CD4-positive, alpha-beta memory T cell (primary cell): ENCODE measurements at regions of chr15 and their contacts with region 1.

Region 1: DNA sequence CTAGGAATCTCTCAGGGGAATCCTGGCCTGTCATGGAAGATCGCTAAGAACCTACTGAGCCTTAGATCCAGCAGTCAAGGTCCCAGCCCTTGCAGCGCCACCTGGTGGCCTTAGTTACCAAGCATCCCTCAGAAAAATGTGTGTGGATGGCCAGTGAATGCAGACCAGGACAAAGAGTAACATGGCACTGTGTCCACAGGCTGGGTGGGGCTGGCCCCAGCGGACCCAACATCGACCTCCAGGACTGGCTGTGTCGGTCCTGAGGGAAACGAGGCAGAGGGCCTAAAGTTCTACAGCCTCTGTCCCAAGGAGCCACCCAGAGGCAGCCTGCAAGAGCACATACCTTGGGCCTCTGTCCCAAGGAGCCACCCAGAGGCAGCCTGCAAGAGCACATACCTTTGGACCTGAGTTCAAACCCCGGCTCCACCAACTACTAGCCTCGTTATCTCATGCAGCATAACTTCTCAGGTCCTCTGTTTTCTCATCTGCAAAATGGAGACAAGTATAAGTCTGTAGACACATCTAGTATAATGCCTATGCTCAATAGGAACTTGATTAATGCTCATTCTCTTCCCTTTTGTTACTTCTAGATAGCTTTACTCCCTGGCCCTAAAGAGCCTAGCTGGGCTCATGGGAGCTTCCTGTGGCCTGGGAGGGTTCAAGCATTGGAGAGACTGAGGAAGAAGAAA is 57.5 kb upstream of the HERC1 start:
- DNase-seq: peak; percentile 63 to 76 (median 69)
- H3K4me3 ChIP-seq: no peak overlapping the region
- H3K4me3 Mint-ChIP-seq: peak overlapping the region in 5 of 8 donors; percentile 4 to 79 (median 42)
- H3K27ac ChIP-seq: peak overlapping the region; percentile 53
- H3K27ac Mint-ChIP-seq: peak overlapping the region; percentile 71 to 94 (median 87)
- H3K4me1 ChIP-seq: peaks cover 58% of the 10 kb centered on the region
- H3K4me1 Mint-ChIP-seq: peaks cover 40 to 56% (median 49%) of the 10 kb centered on the region in 4 donors
- H3K27me3 ChIP-seq: no peaks in the 10 kb centered on the region
- H3K27me3 Mint-ChIP-seq: no peaks in the 10 kb centered on the region

Region 2: DNA sequence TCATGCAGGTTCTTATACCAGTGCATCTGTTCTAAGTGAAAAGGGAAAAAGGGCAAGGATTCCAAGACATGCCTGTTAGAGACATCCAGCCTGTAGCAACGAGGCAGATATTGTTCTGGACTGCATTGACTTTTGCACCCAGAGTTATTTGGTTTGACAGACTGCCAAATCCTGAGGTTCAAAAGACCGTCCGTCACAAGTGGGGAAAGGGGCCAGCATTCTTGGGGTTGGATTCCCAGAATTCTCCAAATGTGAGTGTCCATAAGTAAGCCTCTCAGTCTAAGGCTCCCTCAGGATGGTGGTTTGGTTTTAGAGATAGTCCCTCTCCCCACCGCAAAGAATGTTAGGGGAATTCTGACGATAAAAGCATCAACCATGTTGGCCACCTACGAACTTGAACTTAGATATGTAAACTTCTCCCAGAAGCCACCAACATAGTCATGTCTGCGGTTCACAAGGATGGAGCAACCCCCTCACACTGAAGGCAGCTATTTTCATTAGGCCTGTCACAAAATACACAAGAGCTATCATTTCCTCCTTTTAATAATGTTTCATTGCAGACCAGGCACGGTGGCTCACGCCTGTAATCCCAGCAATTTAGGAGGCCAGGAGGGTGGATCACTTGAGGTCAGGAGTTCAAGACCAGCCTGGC is 783.2 kb before region 1 on chr15:
- CTCF ChIA-PET with region 1: no interaction called
- POLR2A ChIA-PET with region 1: no interaction called
- intact Hi-C with region 1: no loop called
- DNase-seq: no peak
- H3K4me3 ChIP-seq: no peak overlapping the region
- H3K4me3 Mint-ChIP-seq: no peak overlapping the region
- H3K27ac ChIP-seq: no peak overlapping the region
- H3K27ac Mint-ChIP-seq: no peak overlapping the region
- H3K4me1 ChIP-seq: no peaks in the 10 kb centered on the region
- H3K4me1 Mint-ChIP-seq: peaks cover 0 to 2% (median 0%) of the 10 kb centered on the region in 4 donors
- H3K27me3 ChIP-seq: no peaks in the 10 kb centered on the region
- H3K27me3 Mint-ChIP-seq: peaks cover 8 to 25% of the 10 kb centered on the region in 2 donors

Region 3: GRCh38 chr15:63610200-63610841 is 280.9 kb before region 1 on chr15:
- CTCF ChIA-PET with region 1: interaction called, 4 read pairs
- POLR2A ChIA-PET with region 1: no interaction called
- intact Hi-C with region 1: loop called (anchors 2 kb)
- DNase-seq: peak; percentile 68 to 85 (median 75)
- H3K4me3 ChIP-seq: no peak overlapping the region
- H3K4me3 Mint-ChIP-seq: peak overlapping the region; percentile 3 to 60 (median 34)
- H3K27ac ChIP-seq: peak overlapping the region; percentile 33
- H3K27ac Mint-ChIP-seq: peak overlapping the region; percentile 27 to 97 (median 93)
- H3K4me1 ChIP-seq: peaks cover 33% of the 10 kb centered on the region
- H3K4me1 Mint-ChIP-seq: peaks cover 27 to 47% (median 39%) of the 10 kb centered on the region in 4 donors
- H3K27me3 ChIP-seq: no peaks in the 10 kb centered on the region
- H3K27me3 Mint-ChIP-seq: no peaks in the 10 kb centered on the region

Region 4: GRCh38 chr15:63826528-63826927 is 64.7 kb before region 1 on chr15:
- CTCF ChIA-PET with region 1: interaction called, 17 read pairs
- POLR2A ChIA-PET with region 1: interaction called, 5 read pairs
- intact Hi-C with region 1: loop called (anchors 1 kb)
- DNase-seq: peak; percentile 34 to 49 (median 43)
- H3K4me3 ChIP-seq: no peak overlapping the region
- H3K4me3 Mint-ChIP-seq: peak overlapping the region in 4 of 8 donors; percentile 29 to 43 (median 40)
- H3K27ac ChIP-seq: no peak overlapping the region
- H3K27ac Mint-ChIP-seq: peak overlapping the region in 6 of 7 donors; percentile 36 to 85 (median 74)
- H3K4me1 ChIP-seq: peaks cover 75% of the 10 kb centered on the region
- H3K4me1 Mint-ChIP-seq: peaks cover 62 to 86% (median 74%) of the 10 kb centered on the region in 4 donors
- H3K27me3 ChIP-seq: no peaks in the 10 kb centered on the region
- H3K27me3 Mint-ChIP-seq: no peaks in the 10 kb centered on the region

Region 5: GRCh38 chr15:63860155-63860554 is 31.1 kb before region 1 on chr15:
- CTCF ChIA-PET with region 1: interaction called, 16 read pairs
- POLR2A ChIA-PET with region 1: interaction called, 18 read pairs
- intact Hi-C with region 1: loop called (anchors 2 kb)
- DNase-seq: peak; percentile 77 to 83 (median 81)
- H3K4me3 ChIP-seq: peak overlapping the region in 1 of 2 donors; percentile 20
- H3K4me3 Mint-ChIP-seq: peak overlapping the region; percentile 0 to 83 (median 74)
- H3K27ac ChIP-seq: peak overlapping the region; percentile 39
- H3K27ac Mint-ChIP-seq: peak overlapping the region; percentile 92 to 99 (median 97)
- H3K4me1 ChIP-seq: peaks cover 37% of the 10 kb centered on the region
- H3K4me1 Mint-ChIP-seq: peaks cover 29 to 48% (median 40%) of the 10 kb centered on the region in 4 donors
- H3K27me3 ChIP-seq: no peaks in the 10 kb centered on the region
- H3K27me3 Mint-ChIP-seq: no peaks in the 10 kb centered on the region

Region 6: DNA sequence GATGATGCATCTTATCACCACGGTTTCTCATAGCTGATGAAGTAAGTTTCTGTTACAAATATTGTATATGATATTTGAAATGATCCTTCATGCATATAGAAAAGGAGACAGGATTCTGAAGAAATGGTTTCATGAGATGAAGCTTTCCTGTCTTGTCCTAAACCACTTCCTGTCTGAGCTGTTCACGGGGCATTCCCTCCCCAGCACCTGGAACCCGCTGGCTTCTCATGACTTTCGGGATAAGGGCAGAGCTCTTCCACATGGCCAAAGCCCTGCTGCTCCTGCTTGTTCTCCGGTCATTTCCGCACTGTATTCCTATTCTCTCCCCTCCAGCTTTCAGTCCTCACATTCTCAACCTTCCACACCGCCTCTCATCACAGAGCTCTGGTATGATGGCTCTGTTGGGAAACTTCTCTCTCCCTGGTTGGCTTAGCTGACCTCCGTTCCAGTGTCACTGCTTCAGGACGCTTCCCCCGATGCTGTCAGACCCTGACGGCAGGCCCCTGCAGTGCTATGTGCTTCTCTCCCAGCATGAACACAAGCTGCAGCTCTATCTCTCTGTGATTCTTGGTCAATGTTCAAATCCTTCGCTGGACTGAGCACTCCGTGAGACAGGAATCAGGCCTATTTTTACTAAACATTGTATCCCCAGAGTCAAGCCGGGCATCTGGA is 29.4 kb after region 1 on chr15:
- CTCF ChIA-PET with region 1: interaction called, 11 read pairs
- POLR2A ChIA-PET with region 1: interaction called, 10 read pairs
- intact Hi-C with region 1: no loop called
- DNase-seq: no peak
- H3K4me3 ChIP-seq: no peak overlapping the region
- H3K4me3 Mint-ChIP-seq: peak overlapping the region in 1 of 8 donors; percentile 31
- H3K27ac ChIP-seq: no peak overlapping the region
- H3K27ac Mint-ChIP-seq: peak overlapping the region in 1 of 7 donors; percentile 75
- H3K4me1 ChIP-seq: peaks cover 14% of the 10 kb centered on the region
- H3K4me1 Mint-ChIP-seq: peaks cover 8 to 17% (median 12%) of the 10 kb centered on the region in 4 donors
- H3K27me3 ChIP-seq: no peaks in the 10 kb centered on the region
- H3K27me3 Mint-ChIP-seq: no peaks in the 10 kb centered on the region

Region 7: DNA sequence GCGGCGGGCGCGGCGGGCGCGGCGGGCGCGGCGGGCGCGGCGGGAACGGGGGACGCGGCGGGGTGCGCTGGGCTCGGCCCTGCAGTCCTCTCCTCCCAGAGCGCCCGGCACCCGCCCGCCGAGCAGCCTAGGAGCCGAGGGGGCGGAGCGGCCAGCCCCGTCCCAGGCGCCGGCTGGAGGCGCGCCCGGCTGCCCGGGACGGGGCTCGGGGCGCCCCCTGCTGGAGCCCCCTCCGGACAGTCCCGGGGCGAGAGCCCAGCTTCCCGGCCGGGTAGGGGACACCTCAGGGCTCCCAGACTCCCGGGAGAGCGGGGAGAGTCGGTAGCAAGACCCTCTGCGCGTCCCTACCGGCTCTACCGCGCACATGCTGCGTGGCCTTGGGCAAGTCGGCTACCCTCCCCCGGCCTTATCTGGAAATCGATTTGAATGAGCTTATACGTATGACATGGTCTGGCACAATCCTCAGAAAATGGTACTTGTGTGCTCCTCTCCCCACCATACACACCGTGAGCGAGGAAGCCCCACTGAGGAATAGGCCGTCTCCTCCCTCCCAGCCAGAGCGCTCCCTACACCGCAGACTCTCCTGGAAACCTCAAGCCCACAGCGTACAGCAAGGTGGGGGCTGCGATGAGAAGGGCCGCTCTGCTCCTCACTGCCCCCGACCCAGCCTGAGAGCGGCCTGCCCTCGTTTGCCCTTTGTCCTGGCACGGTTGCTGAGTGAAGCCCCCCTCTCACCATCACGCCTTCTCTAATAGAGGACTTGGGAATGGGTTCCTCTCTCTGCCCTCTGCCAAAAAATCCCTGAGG is 155.3 kb after region 1 on chr15 and contains the start of gene DAPK2:
- CTCF ChIA-PET with region 1: interaction called, 20 read pairs
- POLR2A ChIA-PET with region 1: interaction called, 9 read pairs
- intact Hi-C with region 1: no loop called
- DNase-seq: peak; percentile 60 to 76 (median 64)
- H3K4me3 ChIP-seq: peak within 1 kb of the TSS; percentile 43 to 51
- H3K4me3 Mint-ChIP-seq: peak within 1 kb of the TSS; percentile 75 to 91 (median 78)
- H3K27ac ChIP-seq: no peak within 1 kb of the TSS
- H3K27ac Mint-ChIP-seq: peak within 1 kb of the TSS in 6 of 7 donors; percentile 13 to 87 (median 72)
- H3K4me1 ChIP-seq: peaks cover 12% of the 10 kb centered on the region
- H3K4me1 Mint-ChIP-seq: peaks cover 4 to 10% (median 5%) of the 10 kb centered on the region in 4 donors
- H3K27me3 ChIP-seq: no peaks in the 10 kb centered on the region
- H3K27me3 Mint-ChIP-seq: peaks cover 6 to 8% of the 10 kb centered on the region in 2 donors
- total RNA-seq, gene DAPK2: 2.3 to 2.9 TPM